ENCODE measurements at regions of chr9 and their contacts with region 1.

Region 1: DNA sequence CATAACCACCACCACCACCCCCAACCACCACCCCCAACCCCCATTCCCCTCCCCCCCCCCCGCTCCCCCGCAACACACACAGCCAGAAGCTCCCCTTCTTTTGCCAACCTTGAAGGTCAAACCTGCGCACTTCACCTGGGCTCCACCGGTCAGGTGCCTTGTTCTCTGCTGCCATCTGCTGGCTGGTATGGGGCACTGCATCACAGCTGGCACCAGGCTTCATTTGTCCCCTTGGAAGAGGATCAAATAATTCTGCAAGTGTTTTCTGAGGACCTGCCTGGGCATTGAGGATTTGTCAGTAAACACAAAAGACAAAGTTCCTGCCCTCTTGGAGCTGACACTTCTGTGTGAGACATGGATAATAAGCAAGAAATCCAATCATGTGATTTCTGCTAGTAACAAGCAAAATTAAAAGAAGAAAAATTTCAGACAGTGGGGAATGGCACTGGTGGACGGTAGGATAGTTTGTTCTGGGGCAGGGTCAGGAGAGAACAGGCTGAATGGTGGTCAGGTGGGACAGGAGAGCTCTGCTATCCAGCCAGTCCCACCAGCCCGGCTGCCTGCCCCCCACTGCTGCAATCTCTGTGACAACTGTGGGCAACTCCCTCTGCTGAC is 55.6 kb upstream of the LMX1B start:
- DNase-seq: peak; percentile 51 to 72
- ATAC-seq: peak; percentile 79 to 86; a peak in 5 of 6 replicates
- H3K4me3 ChIP-seq: no peak overlapping the region
- H3K27ac ChIP-seq: no peak overlapping the region
- H3K4me1 ChIP-seq: no peaks in the 10 kb centered on the region
- CTCF ChIP-seq: peak; percentile 80
- EP300 ChIP-seq: no peak
- POLR2A ChIP-seq: no peak
- RAD21 ChIP-seq: peak; percentile 85 to 88

Region 2: GRCh38 chr9:126506361-126506941 is 51.7 kb before region 1 on chr9:
- CTCF ChIA-PET with region 1: interaction called, 225 read pairs
- POLR2A ChIA-PET with region 1: no interaction called
- DNase-seq: no peak
- ATAC-seq: no peak; a peak in 1 of 6 replicates
- H3K4me3 ChIP-seq: no peak overlapping the region
- H3K27ac ChIP-seq: no peak overlapping the region
- H3K4me1 ChIP-seq: no peaks in the 10 kb centered on the region
- CTCF ChIP-seq: no peak
- EP300 ChIP-seq: no peak
- POLR2A ChIP-seq: no peak
- RAD21 ChIP-seq: no peak

Region 3: DNA sequence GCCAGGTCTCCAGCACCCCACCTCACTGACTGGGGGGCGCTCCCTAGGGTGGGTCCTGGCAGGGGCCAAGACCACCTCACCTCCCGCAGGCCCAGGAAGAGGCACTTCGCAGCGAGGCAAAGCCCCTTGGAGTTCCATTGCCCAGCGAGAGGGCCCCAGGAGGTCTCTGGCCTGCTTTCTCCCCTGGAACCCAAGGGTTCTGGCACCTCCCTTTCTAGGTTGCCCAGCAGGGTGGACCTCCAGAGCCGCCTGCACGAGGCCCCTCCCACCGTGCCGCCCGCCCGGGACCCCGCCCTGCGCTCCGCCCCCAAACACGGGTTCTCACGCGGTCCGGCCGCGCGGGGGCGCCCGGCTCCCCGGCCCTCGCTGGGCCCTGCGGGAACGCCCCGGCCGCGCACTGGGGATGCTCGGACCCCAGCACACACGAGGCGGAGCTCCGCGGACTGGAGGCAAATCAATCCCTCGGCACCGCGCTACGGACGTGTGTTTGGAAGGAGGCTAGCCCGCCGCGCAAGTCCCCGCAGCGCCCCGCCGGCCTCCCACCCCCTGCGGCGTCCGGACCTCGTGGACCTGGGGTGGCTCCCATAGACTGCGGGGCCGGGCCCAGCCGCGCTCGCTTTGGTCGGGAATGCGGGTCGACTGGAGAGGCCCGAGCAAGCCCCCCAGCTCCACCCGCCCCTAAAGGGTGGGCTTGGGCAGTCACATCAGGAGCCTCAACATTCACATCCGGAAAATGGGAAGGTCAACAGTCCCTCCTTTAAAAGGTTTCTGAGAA is 43.9 kb before region 1 on chr9:
- CTCF ChIA-PET with region 1: interaction called, 51 read pairs
- POLR2A ChIA-PET with region 1: no interaction called
- DNase-seq: peak; percentile 67 to 87
- ATAC-seq: peak; percentile 72 to 93
- H3K4me3 ChIP-seq: peak overlapping the region; percentile 43
- H3K27ac ChIP-seq: peak overlapping the region; percentile 43 to 48; a peak in 4 of 6 replicates
- H3K4me1 ChIP-seq: peaks cover 12% of the 10 kb centered on the region; the same call in 2 of the 3 replicates
- CTCF ChIP-seq: peak; percentile 77
- EP300 ChIP-seq: no peak
- POLR2A ChIP-seq: no peak
- RAD21 ChIP-seq: peak; percentile 17 to 40; a peak in 3 of 5 replicates

Region 4: DNA sequence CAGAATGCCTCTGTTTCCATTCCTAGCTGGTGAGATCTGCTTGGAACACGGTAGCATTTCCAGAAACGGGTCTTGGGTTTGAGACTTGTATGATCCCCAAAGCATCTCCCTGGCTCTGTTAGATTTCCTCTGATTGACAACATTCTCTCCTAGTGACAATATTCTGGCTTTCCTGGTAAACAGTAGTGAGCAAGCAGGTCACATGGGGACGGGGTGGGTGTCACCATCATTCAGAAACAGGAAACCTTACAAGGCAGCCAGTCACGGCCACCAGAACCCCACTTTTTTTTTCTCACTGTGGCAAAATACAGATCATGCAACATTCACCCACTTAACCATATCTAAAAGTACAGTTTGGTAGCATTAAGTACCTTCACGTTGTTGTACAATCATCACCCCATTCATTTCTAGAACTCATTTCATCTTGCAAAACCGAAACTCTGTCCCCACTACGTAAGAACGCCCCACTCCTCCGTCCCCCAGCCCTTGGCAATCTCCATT is 34.5 kb before region 1 on chr9:
- CTCF ChIA-PET with region 1: interaction called, 51 read pairs
- POLR2A ChIA-PET with region 1: no interaction called
- DNase-seq: no peak
- ATAC-seq: no peak; a peak in 1 of 6 replicates
- H3K4me3 ChIP-seq: no peak overlapping the region
- H3K27ac ChIP-seq: no peak overlapping the region
- H3K4me1 ChIP-seq: no peaks in the 10 kb centered on the region
- CTCF ChIP-seq: no peak
- EP300 ChIP-seq: no peak
- POLR2A ChIP-seq: no peak
- RAD21 ChIP-seq: no peak

Region 5: DNA sequence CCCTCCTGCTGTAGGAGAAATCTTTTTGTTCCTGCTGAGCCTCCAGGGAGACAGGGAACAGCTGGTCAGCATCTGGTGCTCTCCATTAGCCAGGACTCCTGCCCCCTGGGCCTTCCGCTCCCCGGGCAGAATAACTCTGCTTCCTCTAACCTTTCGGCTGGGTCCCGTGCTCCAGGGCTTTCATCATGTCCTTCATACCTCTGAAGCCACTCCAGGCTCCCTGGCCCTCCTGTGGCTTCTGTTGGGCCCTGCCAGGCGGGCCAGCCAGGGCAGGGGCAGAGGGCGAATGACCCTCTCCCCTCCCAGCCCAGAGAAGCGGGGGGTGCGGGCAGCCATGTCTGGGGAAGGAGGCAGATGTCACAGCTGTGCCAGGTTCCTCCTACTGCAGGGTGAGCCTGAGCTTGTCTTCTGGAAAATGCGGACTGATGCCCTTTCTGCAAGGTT is 26.1 kb before region 1 on chr9:
- CTCF ChIA-PET with region 1: interaction called, 21 read pairs
- POLR2A ChIA-PET with region 1: no interaction called
- DNase-seq: no peak
- ATAC-seq: no peak; a peak in 1 of 6 replicates
- H3K4me3 ChIP-seq: no peak overlapping the region
- H3K27ac ChIP-seq: no peak overlapping the region
- H3K4me1 ChIP-seq: no peaks in the 10 kb centered on the region
- CTCF ChIP-seq: no peak
- EP300 ChIP-seq: no peak
- POLR2A ChIP-seq: no peak
- RAD21 ChIP-seq: no peak

Region 6: GRCh38 chr9:126538550-126538949 is 19.6 kb before region 1 on chr9:
- CTCF ChIA-PET with region 1: interaction called, 60 read pairs
- POLR2A ChIA-PET with region 1: no interaction called
- DNase-seq: no peak
- ATAC-seq: no peak
- H3K4me3 ChIP-seq: no peak overlapping the region
- H3K27ac ChIP-seq: no peak overlapping the region
- H3K4me1 ChIP-seq: no peaks in the 10 kb centered on the region
- CTCF ChIP-seq: no peak
- EP300 ChIP-seq: no peak
- POLR2A ChIP-seq: no peak
- RAD21 ChIP-seq: no peak

Region 7: DNA sequence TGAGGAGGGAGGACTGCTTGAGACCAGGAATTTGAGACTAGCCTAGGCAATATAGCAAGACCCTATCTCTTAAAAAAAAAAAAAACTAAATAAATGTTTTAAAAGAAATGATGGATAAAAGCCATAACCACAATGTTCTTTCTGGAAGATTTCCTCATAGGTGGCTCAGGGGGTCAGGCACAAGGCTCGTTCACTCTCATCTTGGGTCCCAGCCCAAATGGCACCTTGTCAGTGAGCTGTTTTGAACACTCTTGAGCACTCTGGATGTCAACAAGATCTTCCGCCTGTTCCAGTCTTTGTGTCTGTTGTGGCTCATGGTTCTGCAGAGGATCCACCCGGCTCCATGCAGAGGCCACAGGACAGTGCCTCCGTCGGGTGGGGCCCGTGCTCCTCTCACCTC is 19.9 kb after region 1 on chr9:
- CTCF ChIA-PET with region 1: interaction called, 28 read pairs
- POLR2A ChIA-PET with region 1: no interaction called
- DNase-seq: no peak
- ATAC-seq: no peak
- H3K4me3 ChIP-seq: no peak overlapping the region
- H3K27ac ChIP-seq: no peak overlapping the region
- H3K4me1 ChIP-seq: no peaks in the 10 kb centered on the region
- CTCF ChIP-seq: no peak
- EP300 ChIP-seq: no peak
- POLR2A ChIP-seq: no peak
- RAD21 ChIP-seq: no peak

Region 8: GRCh38 chr9:126650404-126651341 is 92.5 kb after region 1 on chr9:
- CTCF ChIA-PET with region 1: no interaction called
- POLR2A ChIA-PET with region 1: no interaction called
- DNase-seq: no peak
- ATAC-seq: no peak
- H3K4me3 ChIP-seq: no peak overlapping the region
- H3K27ac ChIP-seq: no peak overlapping the region
- H3K4me1 ChIP-seq: no peaks in the 10 kb centered on the region
- CTCF ChIP-seq: no peak
- EP300 ChIP-seq: no peak
- POLR2A ChIP-seq: no peak
- RAD21 ChIP-seq: no peak

Measured in A549 (cell line).